Psoas muscle (tissue), 8 donors: ENCODE measurements at regions of chr14 and their contacts with region 1.

Region 1: GRCh38 chr14:73633116-73634010 is 11.4 kb upstream of the DNAL1 start:
- DNase-seq: peak; percentile 63 to 78
- ATAC-seq: peak; percentile 90 to 92 (median 90)
- H3K4me3 ChIP-seq: peak overlapping the region; percentile 68
- H3K27ac ChIP-seq: peak overlapping the region; percentile 59
- H3K4me1 ChIP-seq: peaks cover 4% of the 10 kb centered on the region
- H3K27me3 ChIP-seq: no peaks in the 10 kb centered on the region
- CTCF ChIP-seq: peak; percentile 85

Region 2: DNA sequence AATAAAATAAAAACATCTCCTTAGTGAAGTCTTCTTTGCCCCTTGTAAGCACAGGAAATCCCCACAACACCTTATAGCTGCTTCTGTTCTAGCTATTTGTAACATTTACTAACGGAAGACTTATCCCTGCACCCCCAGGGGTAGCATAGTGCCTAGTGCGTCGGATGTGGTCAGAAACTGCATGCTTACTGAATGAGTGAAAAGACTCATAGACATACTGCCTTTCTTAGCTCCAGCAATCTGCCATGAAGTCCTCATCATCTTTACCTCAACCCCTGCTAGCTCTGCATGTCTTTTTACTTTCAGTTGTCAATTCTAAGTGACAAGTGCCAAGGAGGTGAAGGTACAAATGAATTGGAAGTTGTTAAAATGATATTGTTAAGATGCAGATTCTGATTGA is 129.7 kb before region 1 on chr14:
- intact Hi-C with region 1: loop called in 1 of 2 experiments (anchors 2 kb)
- DNase-seq: no peak
- ATAC-seq: no peak
- H3K4me3 ChIP-seq: no peak overlapping the region
- H3K27ac ChIP-seq: no peak overlapping the region
- H3K4me1 ChIP-seq: peaks cover 10% of the 10 kb centered on the region
- H3K27me3 ChIP-seq: no peaks in the 10 kb centered on the region
- CTCF ChIP-seq: no peak

Region 3: DNA sequence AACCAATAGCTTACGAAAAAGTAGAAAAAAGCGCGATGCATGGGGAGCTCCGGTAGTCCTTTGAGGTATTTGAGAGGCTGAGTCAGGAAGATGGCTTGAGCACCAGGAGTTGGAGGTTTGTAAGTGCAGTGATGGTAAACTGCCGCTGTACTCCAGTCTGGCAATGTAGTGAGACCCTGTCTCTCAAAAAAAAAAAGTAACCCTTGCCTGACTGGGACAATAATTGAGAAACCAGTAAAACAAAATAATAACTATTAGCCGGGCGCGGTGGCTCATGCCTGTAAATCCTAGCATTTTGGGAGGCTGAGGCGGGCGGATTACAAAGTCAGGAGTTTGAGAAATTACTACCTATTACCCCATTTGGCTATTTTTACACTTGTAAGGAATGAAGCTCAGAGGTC is 65.0 kb before region 1 on chr14:
- intact Hi-C with region 1: loop called in 1 of 2 experiments (anchors 5 kb)
- DNase-seq: no peak
- ATAC-seq: peak in 1 of 4 donors; percentile 32
- H3K4me3 ChIP-seq: peak overlapping the region; percentile 77
- H3K27ac ChIP-seq: peak overlapping the region; percentile 92
- H3K4me1 ChIP-seq: peaks cover 23% of the 10 kb centered on the region
- H3K27me3 ChIP-seq: no peaks in the 10 kb centered on the region
- CTCF ChIP-seq: no peak

Region 4: GRCh38 chr14:73589116-73589515 is 44.2 kb before region 1 on chr14:
- intact Hi-C with region 1: loop called in 1 of 2 experiments (anchors 5 kb)
- DNase-seq: no peak
- ATAC-seq: no peak
- H3K4me3 ChIP-seq: no peak overlapping the region
- H3K27ac ChIP-seq: no peak overlapping the region
- H3K4me1 ChIP-seq: no peaks in the 10 kb centered on the region
- H3K27me3 ChIP-seq: no peaks in the 10 kb centered on the region
- CTCF ChIP-seq: no peak

Region 5: GRCh38 chr14:73816393-73816816 is 183.0 kb after region 1 on chr14:
- intact Hi-C with region 1: no loop called
- DNase-seq: no peak
- ATAC-seq: no peak
- H3K4me3 ChIP-seq: no peak overlapping the region
- H3K27ac ChIP-seq: no peak overlapping the region
- H3K4me1 ChIP-seq: no peaks in the 10 kb centered on the region
- H3K27me3 ChIP-seq: no peaks in the 10 kb centered on the region
- CTCF ChIP-seq: no peak

Region 6: GRCh38 chr14:74018586-74019407 is 385.4 kb after region 1 on chr14 and contains the starts of genes BBOF1 and ENTPD5:
- intact Hi-C with region 1: no loop called
- DNase-seq: peak; percentile 88 to 93
- ATAC-seq: peak; percentile 97 to 99 (median 98)
- H3K4me3 ChIP-seq: peak within 1 kb of the TSS; percentile 97
- H3K27ac ChIP-seq: peak within 1 kb of the TSS; percentile 99
- H3K4me1 ChIP-seq: peaks cover 3% of the 10 kb centered on the region
- H3K27me3 ChIP-seq: no peaks in the 10 kb centered on the region
- CTCF ChIP-seq: no peak
- total RNA-seq, gene BBOF1: 1.0 to 1.7 (median 1.3) TPM
- total RNA-seq, gene ENTPD5: 5.2 to 11.5 (median 9.1) TPM